ENCODE measurements at regions of chr16 and their contacts with region 1.

Region 1: DNA sequence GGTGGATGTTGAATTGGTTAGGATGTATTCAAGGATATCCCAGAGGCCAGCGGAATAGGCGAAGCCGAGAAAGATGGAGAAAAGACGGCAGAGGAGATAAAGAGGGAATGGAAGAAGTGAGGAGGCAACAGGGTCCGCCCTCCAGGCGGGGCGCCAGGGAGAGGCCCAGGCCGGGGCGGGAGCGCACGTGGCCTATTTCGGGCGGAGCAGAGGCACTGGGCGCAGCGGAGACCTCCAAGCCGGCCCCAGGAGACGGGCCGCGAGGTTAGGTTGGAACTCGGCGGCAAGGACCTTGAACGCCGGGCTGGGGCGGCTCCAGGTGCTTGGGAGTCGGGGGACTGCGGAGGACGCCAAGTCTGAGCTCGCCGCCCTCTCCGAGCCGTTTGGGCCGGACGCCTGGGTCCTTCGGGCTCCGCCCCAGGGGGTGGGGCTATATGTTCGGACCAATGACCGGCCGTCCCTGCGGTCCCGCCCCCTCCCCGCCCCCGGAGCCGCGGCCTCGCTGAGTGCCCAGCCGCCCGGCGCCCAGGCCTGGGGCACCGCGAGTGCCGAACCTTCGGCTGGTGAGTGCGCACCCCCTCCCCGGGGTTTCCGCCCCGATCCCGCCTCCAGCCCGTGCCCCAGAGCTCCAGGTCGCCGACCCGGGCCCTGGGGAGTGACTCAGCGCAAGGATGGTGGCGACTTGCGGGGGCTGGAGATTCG is at the start of gene ZNF771:
- DNase-seq: peak; percentile 94
- H3K4me3 Mint-ChIP-seq: peak within 1 kb of the TSS; percentile 95
- H3K27ac Mint-ChIP-seq: peak within 1 kb of the TSS; percentile 91
- H3K4me1 Mint-ChIP-seq: peaks cover 25% of the 10 kb centered on the region
- H3K27me3 Mint-ChIP-seq: no peaks in the 10 kb centered on the region
- total RNA-seq, gene ZNF771: 5.4 to 5.7 TPM

Region 2: DNA sequence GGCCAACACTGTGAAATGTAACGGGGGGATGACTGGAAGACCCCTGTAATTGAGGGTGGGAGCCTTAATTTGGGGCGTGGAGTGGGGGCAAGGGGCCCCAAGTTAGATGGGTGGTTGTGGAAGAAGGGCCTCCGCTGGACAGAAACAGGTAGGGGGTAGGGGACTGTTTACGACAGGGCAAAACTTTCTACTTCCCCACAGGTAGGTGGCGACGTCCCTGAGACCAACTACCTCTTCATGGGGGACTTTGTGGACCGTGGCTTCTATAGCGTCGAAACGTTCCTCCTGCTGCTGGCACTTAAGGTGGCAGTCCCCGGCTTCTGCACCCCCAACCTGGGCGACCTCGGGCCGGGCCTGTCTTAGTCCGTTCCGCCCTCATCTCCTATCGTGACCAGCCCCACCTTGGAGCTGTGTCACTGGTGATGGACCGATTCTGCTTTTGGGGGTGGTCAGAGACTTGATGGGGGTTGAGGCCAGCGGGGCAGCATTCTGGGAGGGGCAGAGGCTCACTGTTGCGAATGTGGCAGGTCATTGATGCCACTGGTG is 324.6 kb before region 1 on chr16:
- CTCF ChIA-PET with region 1: no interaction called
- POLR2A ChIA-PET with region 1: no interaction called
- intact Hi-C with region 1: no loop called
- DNase-seq: no peak
- H3K4me3 Mint-ChIP-seq: no peak overlapping the region
- H3K27ac Mint-ChIP-seq: no peak overlapping the region
- H3K4me1 Mint-ChIP-seq: peaks cover 15% of the 10 kb centered on the region
- H3K27me3 Mint-ChIP-seq: no peaks in the 10 kb centered on the region

Region 3: GRCh38 chr16:30112197-30113030 is 294.8 kb before region 1 on chr16:
- CTCF ChIA-PET with region 1: interaction called, 22 read pairs
- POLR2A ChIA-PET with region 1: no interaction called
- intact Hi-C with region 1: no loop called
- DNase-seq: peak; percentile 79
- H3K4me3 Mint-ChIP-seq: no peak overlapping the region
- H3K27ac Mint-ChIP-seq: no peak overlapping the region
- H3K4me1 Mint-ChIP-seq: peaks cover 16% of the 10 kb centered on the region
- H3K27me3 Mint-ChIP-seq: no peaks in the 10 kb centered on the region

Region 4: DNA sequence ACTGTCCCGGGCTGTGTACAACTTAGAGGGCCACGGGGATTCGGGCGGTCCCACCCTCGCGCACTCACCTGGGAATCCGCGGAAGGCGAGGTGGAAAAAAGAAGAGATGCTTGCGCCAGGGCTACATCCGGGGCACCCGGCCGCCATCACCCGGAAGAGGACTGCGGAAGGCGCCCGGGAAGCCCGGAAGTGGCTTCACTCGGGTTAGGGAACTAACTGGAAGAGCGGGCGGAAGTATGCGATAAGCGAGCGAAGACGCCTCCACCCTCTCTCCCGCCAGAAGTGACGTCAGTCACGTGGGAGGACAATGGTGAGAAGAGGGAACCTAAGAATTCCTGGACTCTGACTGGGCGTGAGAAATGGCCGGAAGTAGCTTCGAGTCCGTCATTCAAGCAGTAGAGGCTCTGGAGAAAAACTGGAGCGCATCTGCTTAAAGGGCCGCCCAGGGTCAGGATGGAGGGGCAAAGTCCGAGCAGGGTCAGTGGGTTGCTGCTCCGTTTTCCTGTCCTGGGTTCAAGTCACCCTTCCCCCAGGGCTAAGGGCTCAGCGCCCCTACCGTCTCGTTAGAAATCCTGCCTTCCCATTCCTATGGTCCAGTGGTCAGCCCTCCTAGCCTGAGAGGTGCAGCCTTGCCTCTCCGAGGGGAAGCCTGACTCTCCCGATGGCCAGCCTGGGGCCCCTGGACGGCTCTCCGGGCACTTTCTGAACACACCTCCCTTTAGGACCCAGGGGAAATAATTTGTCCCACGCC is 51.9 kb before region 1 on chr16 and contains the start of gene CD2BP2:
- CTCF ChIA-PET with region 1: interaction called, 6 read pairs
- POLR2A ChIA-PET with region 1: no interaction called
- intact Hi-C with region 1: loop called (anchors 2 kb)
- DNase-seq: peak; percentile 94
- H3K4me3 Mint-ChIP-seq: peak within 1 kb of the TSS; percentile 94
- H3K27ac Mint-ChIP-seq: peak within 1 kb of the TSS; percentile 95
- H3K4me1 Mint-ChIP-seq: peaks cover 45% of the 10 kb centered on the region
- H3K27me3 Mint-ChIP-seq: no peaks in the 10 kb centered on the region
- total RNA-seq, gene CD2BP2: 60.7 to 61.4 TPM

Region 5: GRCh38 chr16:30370444-30371247 is 36.6 kb before region 1 on chr16 and contains the start of gene TBC1D10B:
- CTCF ChIA-PET with region 1: interaction called, 25 read pairs
- POLR2A ChIA-PET with region 1: interaction called, 7 read pairs
- intact Hi-C with region 1: loop called (anchors 2 kb)
- DNase-seq: peak; percentile 100
- H3K4me3 Mint-ChIP-seq: peak within 1 kb of the TSS; percentile 91
- H3K27ac Mint-ChIP-seq: peak within 1 kb of the TSS; percentile 95
- H3K4me1 Mint-ChIP-seq: peaks cover 34% of the 10 kb centered on the region
- H3K27me3 Mint-ChIP-seq: peaks cover 3% of the 10 kb centered on the region
- total RNA-seq, gene TBC1D10B: 54.7 to 54.8 TPM

Region 6: GRCh38 chr16:30378236-30379204 is 28.7 kb before region 1 on chr16:
- CTCF ChIA-PET with region 1: interaction called, 23 read pairs
- POLR2A ChIA-PET with region 1: interaction called, 16 read pairs
- intact Hi-C with region 1: no loop called
- DNase-seq: peak; percentile 100
- H3K4me3 Mint-ChIP-seq: peak overlapping the region; percentile 99
- H3K27ac Mint-ChIP-seq: peak overlapping the region; percentile 96
- H3K4me1 Mint-ChIP-seq: peaks cover 44% of the 10 kb centered on the region
- H3K27me3 Mint-ChIP-seq: no peaks in the 10 kb centered on the region

Region 7: DNA sequence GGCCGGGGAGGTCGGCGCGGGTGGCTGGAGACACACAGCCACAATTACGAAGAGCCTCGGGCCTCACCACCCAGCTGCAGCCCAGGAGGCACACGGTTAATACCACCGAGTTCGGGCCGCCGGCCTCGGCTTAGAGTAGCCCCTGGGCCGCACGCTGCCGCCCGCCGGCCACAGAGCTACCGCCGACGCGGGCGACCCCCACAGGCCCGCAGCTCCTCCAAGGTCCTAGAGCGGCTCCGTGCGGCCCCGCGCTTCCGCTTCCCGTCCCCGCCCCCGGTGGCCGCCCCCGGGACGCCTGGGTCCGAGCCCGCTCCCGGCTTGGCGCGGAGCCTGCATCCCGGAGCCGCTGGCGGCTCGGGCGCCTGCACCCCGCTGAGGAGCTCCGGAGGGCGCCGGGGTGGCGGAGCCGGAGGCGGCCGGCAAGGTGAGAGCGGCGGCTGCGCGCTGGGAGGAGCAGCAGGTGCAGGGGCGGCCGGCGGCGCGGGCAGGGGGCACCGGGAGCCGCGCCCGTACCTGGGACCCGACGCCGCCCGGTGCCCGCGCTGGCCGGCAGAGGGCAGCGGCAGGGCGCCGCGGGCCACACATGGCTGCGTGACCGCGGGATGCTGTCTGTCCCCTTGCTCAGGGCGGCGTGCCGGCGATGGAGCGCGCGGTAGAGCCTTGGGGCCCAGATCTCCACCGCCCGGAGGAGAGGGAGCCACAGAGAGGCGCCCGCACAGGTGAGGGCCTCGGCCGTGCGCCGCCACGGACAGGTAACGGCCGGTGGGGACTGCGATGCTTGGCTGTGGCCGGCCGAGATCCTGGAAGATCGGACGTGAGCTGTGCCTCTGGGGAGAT is 11.9 kb before region 1 on chr16 and contains the start of gene ZNF48:
- CTCF ChIA-PET with region 1: interaction called, 48 read pairs
- POLR2A ChIA-PET with region 1: interaction called, 16 read pairs
- intact Hi-C with region 1: no loop called
- DNase-seq: peak; percentile 64
- H3K4me3 Mint-ChIP-seq: peak within 1 kb of the TSS; percentile 81
- H3K27ac Mint-ChIP-seq: peak within 1 kb of the TSS; percentile 76
- H3K4me1 Mint-ChIP-seq: peaks cover 32% of the 10 kb centered on the region
- H3K27me3 Mint-ChIP-seq: no peaks in the 10 kb centered on the region
- total RNA-seq, gene ZNF48: 13.1 to 13.6 TPM

Region 8: DNA sequence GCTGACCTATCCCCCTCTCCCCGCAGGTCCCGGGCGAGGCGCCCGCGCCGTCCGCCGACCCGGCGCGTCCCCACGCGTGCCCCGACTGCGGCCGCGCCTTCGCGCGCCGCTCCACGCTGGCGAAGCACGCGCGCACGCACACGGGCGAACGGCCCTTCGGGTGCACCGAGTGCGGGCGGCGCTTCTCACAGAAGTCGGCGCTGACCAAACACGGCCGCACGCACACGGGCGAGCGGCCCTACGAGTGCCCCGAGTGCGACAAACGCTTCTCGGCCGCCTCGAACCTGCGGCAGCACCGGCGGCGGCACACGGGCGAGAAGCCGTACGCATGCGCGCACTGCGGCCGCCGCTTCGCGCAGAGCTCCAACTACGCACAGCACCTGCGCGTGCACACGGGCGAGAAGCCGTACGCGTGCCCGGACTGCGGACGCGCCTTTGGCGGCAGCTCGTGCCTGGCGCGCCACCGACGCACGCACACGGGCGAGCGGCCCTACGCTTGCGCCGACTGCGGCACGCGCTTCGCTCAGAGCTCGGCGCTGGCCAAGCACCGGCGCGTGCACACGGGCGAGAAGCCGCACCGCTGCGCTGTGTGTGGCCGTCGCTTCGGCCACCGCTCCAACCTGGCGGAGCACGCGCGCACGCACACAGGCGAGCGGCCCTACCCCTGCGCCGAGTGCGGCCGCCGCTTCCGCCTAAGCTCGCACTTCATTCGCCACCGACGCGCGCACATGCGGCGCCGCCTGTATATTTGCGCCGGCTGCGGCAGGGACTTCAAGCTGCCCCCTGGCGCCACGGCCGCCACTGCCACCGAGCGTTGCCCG is 10.5 kb after region 1 on chr16:
- CTCF ChIA-PET with region 1: interaction called, 48 read pairs
- POLR2A ChIA-PET with region 1: interaction called, 22 read pairs
- intact Hi-C with region 1: no loop called
- DNase-seq: peak; percentile 92
- H3K4me3 Mint-ChIP-seq: peak overlapping the region; percentile 58
- H3K27ac Mint-ChIP-seq: no peak overlapping the region
- H3K4me1 Mint-ChIP-seq: peaks cover 28% of the 10 kb centered on the region
- H3K27me3 Mint-ChIP-seq: no peaks in the 10 kb centered on the region

Region 9: GRCh38 chr16:30464078-30464477 is 56.8 kb after region 1 on chr16:
- CTCF ChIA-PET with region 1: no interaction called
- POLR2A ChIA-PET with region 1: no interaction called
- intact Hi-C with region 1: no loop called
- DNase-seq: no peak
- H3K4me3 Mint-ChIP-seq: no peak overlapping the region
- H3K27ac Mint-ChIP-seq: no peak overlapping the region
- H3K4me1 Mint-ChIP-seq: peaks cover 22% of the 10 kb centered on the region
- H3K27me3 Mint-ChIP-seq: no peaks in the 10 kb centered on the region

Region 10: GRCh38 chr16:30541502-30542329 is 134.5 kb after region 1 on chr16:
- CTCF ChIA-PET with region 1: no interaction called
- POLR2A ChIA-PET with region 1: no interaction called
- intact Hi-C with region 1: no loop called
- DNase-seq: no peak
- H3K4me3 Mint-ChIP-seq: no peak overlapping the region
- H3K27ac Mint-ChIP-seq: no peak overlapping the region
- H3K4me1 Mint-ChIP-seq: peaks cover 13% of the 10 kb centered on the region
- H3K27me3 Mint-ChIP-seq: no peaks in the 10 kb centered on the region

Measured in activated CD4-positive, alpha-beta memory T cell treated with anti-CD3 and anti-CD28 coated beads for 36 hours (primary cell).